Mammary epithelial cell (primary cell): ENCODE measurements at regions of chr14 and their contacts with region 1.

Region 1: GRCh38 chr14:31926123-31926522 is 151.0 kb upstream of the ARHGAP5 start:
- DNase-seq: no peak
- H3K4me3 ChIP-seq: no peak overlapping the region
- H3K27ac ChIP-seq: no peak overlapping the region
- H3K4me1 ChIP-seq: peaks cover 22% of the 10 kb centered on the region
- H3K27me3 ChIP-seq: no peaks in the 10 kb centered on the region
- CTCF ChIP-seq: peak; percentile 40 to 60

Region 2: GRCh38 chr14:31568671-31569070 is 357.5 kb before region 1 on chr14:
- CTCF ChIA-PET with region 1: no interaction called
- dilution Hi-C with region 1: no loop called
- in situ Hi-C with region 1: no loop called
- intact Hi-C with region 1: no loop called
- DNase-seq: no peak
- H3K4me3 ChIP-seq: no peak overlapping the region
- H3K27ac ChIP-seq: no peak overlapping the region
- H3K4me1 ChIP-seq: peaks cover 4% of the 10 kb centered on the region
- H3K27me3 ChIP-seq: no peaks in the 10 kb centered on the region
- CTCF ChIP-seq: no peak

Region 3: DNA sequence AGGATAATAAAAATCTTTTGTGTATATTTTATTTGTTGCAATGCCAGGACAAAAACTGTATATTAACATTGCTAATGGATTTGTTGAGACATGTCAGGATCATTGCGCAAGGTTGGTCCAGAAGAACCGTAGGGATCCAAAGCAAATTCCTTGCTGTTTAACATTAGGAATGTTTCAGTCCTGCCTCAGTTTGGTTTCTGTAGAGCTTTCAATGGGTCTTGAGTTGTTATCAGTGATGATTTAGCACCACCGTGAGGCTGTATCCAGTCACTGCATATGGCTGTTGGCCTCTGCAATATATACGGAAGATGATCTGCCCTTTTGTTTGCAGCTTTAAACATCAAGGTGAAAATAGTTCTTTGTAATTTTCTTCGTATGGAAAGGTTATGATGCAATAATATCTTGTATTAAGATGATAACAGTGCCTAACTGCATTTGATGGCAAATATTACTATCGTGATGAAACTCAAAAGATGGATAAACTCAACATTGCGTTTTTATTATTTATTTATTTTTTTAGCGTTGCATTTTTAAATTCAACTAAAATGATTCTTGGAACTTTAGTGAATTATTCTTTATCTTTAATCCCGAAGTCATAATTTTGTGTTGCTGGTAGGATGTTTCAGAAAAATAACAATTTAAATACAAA is 634.2 kb after region 1 on chr14:
- CTCF ChIA-PET with region 1: interaction called, 5 read pairs
- dilution Hi-C with region 1: no loop called
- in situ Hi-C with region 1: no loop called
- intact Hi-C with region 1: loop called (anchors 2 kb)
- DNase-seq: peak; percentile 74
- H3K4me3 ChIP-seq: no peak overlapping the region
- H3K27ac ChIP-seq: peak overlapping the region; percentile 53
- H3K4me1 ChIP-seq: peaks cover 19% of the 10 kb centered on the region
- H3K27me3 ChIP-seq: no peaks in the 10 kb centered on the region
- CTCF ChIP-seq: peak; percentile 84 to 98